IMR-90 (cell line): ENCODE measurements at regions of chr9 and their contacts with region 1.

Region 1: GRCh38 chr9:71985297-71985911 is 74.0 kb downstream of the C9orf85 start:
- DNase-seq: no peak
- ATAC-seq: no peak
- H3K4me3 ChIP-seq: no peak overlapping the region
- H3K27ac ChIP-seq: no peak overlapping the region
- H3K4me1 ChIP-seq: peaks cover 4% of the 10 kb centered on the region
- H3K27me3 ChIP-seq: no peaks in the 10 kb centered on the region
- CTCF ChIP-seq: no peak
- POLR2A ChIP-seq: no peak
- RAD21 ChIP-seq: no peak

Region 2: DNA sequence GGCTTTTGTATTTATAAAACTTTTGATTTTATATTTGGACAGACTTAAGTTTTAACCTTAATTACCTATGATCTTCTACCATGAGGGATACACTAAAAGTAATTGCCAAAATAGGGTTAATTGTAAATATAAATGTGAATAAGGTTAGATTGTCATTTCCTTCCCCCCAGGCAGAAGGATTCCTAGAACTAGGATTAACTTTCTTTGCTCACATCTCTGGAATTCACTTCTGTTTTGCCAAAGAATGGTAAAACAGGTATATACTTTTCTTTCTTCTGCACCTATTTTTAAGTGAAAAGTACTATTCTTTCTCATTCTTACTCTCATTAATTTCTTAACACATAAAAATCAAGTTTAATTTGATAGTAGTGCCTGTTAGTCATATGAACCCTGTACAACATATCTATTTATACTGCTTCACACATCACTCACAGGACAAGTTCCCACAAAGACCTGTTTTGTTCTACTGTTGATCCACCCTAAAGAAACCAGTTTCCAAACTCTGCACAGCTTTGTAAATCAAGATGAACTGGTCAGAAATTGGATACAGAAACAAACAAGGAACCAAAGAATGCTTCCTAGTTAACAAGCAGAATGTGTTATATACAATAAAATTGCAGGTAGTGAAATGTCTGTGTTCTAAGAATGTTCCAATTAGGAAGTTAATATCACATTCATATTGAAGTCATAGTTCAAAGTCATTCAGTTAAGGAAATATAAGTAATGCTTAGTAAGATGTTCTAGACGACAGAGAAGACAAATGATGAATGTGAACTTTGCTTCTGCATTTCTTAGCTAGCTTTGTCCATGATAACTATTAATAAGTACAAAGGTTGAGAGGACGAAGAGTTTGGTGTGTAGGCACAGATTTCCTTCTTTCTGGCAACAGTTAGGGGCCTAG is 40.7 kb before region 1 on chr9:
- CTCF ChIA-PET with region 1: no interaction called
- POLR2A ChIA-PET with region 1: no interaction called
- dilution Hi-C with region 1: no loop called
- in situ Hi-C with region 1: no loop called
- intact Hi-C with region 1: loop called (anchors 5 kb)
- DNase-seq: no peak
- ATAC-seq: no peak
- H3K4me3 ChIP-seq: no peak overlapping the region
- H3K27ac ChIP-seq: no peak overlapping the region
- H3K4me1 ChIP-seq: peaks cover 5% of the 10 kb centered on the region; the same call in 1 of the 2 replicates
- H3K27me3 ChIP-seq: no peaks in the 10 kb centered on the region
- CTCF ChIP-seq: no peak
- POLR2A ChIP-seq: no peak
- RAD21 ChIP-seq: no peak